ENCODE measurements at regions of chr1 and their contacts with region 1.

Region 1: GRCh38 chr1:45499415-45499769 is 481 bp downstream of the CCDC163 start:
- DNase-seq: peak; percentile 59
- H3K4me3 ChIP-seq: peak overlapping the region; percentile 86
- H3K27ac ChIP-seq: peak overlapping the region; percentile 54
- H3K4me1 ChIP-seq: peaks cover 21% of the 10 kb centered on the region
- CTCF ChIP-seq: no peak

Region 2: DNA sequence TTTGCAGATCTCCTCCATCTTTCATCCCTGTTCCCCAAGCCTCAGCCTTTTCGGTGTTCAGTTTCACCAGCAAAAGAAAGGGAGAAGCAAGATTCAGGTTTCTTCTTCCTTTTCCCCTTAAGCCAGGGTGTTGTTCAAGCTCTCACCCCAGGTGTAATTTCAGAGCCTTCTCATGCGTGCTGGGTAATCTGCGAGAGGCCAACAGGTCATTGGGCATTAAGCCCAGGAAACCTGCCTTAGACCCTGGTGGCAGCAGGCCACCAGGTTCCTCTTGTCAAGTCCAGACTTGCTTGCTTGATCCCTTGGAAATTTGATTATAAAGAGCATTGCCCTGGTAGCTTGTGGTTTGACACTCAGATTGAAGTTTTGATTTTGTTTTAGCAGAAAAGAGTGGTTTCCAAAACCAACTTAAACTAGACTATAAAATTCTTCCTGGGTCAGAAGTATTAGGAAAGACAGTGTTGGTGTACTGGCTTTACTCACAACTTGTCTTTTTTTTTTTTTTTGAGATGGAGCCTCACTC is 58.1 kb after region 1 on chr1:
- CTCF ChIA-PET with region 1: no interaction called
- POLR2A ChIA-PET with region 1: interaction called, 10 read pairs
- intact Hi-C with region 1: no loop called
- DNase-seq: no peak
- H3K4me3 ChIP-seq: no peak overlapping the region
- H3K27ac ChIP-seq: no peak overlapping the region
- H3K4me1 ChIP-seq: peaks cover 2% of the 10 kb centered on the region
- CTCF ChIP-seq: no peak

Measured in OCI-LY7 (cell line).